Activated B cell treated with CpG ODN at 0.5 μM for 24 hours (primary cell): ENCODE measurements at regions of chr3 and their contacts with region 1.

Region 1: GRCh38 chr3:183635431-183636220 is at the start of gene KLHL24:
- DNase-seq: peak; percentile 83
- ATAC-seq: peak; percentile 73
- H3K4me3 Mint-ChIP-seq: peak within 1 kb of the TSS; percentile 92
- H3K27ac Mint-ChIP-seq: peak within 1 kb of the TSS; percentile 92
- H3K4me1 Mint-ChIP-seq: peaks cover 27% of the 10 kb centered on the region
- H3K27me3 Mint-ChIP-seq: no peaks in the 10 kb centered on the region
- CTCF ChIP-seq: no peak
- total RNA-seq, gene KLHL24: 31.6 and 33.9 TPM in 2 replicates

Region 2: GRCh38 chr3:183285828-183286457 is 349.7 kb before region 1 on chr3:
- CTCF ChIA-PET with region 1: no interaction called
- POLR2A ChIA-PET with region 1: no interaction called
- intact Hi-C with region 1: loop called (anchors 2 kb)
- DNase-seq: peak; percentile 69
- ATAC-seq: peak; percentile 95
- H3K4me3 Mint-ChIP-seq: peak overlapping the region; percentile 78
- H3K27ac Mint-ChIP-seq: peak overlapping the region; percentile 94
- H3K4me1 Mint-ChIP-seq: peaks cover 43% of the 10 kb centered on the region
- H3K27me3 Mint-ChIP-seq: no peaks in the 10 kb centered on the region
- CTCF ChIP-seq: no peak

Region 3: DNA sequence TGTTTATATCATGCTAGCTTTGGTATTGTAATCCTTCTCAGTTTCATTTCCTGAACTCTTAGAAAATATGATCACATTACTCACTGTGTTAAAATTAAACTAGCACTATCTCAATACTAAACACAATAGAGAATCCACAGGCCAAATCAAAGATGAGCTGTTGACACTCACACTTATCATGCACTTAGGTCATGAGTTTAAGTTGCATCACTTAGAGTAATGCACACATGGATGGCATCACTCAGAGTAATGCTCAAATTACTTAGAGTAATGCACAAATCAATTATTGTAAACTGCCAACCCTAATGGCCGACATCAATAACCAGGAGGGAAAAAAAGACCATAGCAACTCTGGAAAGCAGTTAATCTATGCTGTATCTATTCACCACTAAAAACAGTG is 167.2 kb before region 1 on chr3:
- CTCF ChIA-PET with region 1: interaction called, 15 read pairs
- POLR2A ChIA-PET with region 1: no interaction called
- intact Hi-C with region 1: loop called (anchors 1 kb)
- DNase-seq: no peak
- ATAC-seq: no peak
- H3K4me3 Mint-ChIP-seq: no peak overlapping the region
- H3K27ac Mint-ChIP-seq: no peak overlapping the region
- H3K4me1 Mint-ChIP-seq: peaks cover 10% of the 10 kb centered on the region
- H3K27me3 Mint-ChIP-seq: peaks cover 2% of the 10 kb centered on the region
- CTCF ChIP-seq: no peak

Region 4: GRCh38 chr3:183537295-183537730 is 98.3 kb before region 1 on chr3:
- CTCF ChIA-PET with region 1: no interaction called
- POLR2A ChIA-PET with region 1: interaction called, 9 read pairs
- intact Hi-C with region 1: loop called (anchors 1 kb)
- DNase-seq: no peak
- ATAC-seq: no peak
- H3K4me3 Mint-ChIP-seq: peak overlapping the region; percentile 39
- H3K27ac Mint-ChIP-seq: peak overlapping the region; percentile 78
- H3K4me1 Mint-ChIP-seq: peaks cover 94% of the 10 kb centered on the region
- H3K27me3 Mint-ChIP-seq: no peaks in the 10 kb centered on the region
- CTCF ChIP-seq: no peak

Region 5: GRCh38 chr3:183591881-183592521 is 43.6 kb before region 1 on chr3:
- CTCF ChIA-PET with region 1: no interaction called
- POLR2A ChIA-PET with region 1: interaction called, 32 read pairs
- intact Hi-C with region 1: loop called (anchors 1 kb)
- DNase-seq: no peak
- ATAC-seq: peak; percentile 80
- H3K4me3 Mint-ChIP-seq: peak overlapping the region; percentile 59
- H3K27ac Mint-ChIP-seq: peak overlapping the region; percentile 83
- H3K4me1 Mint-ChIP-seq: peaks cover 47% of the 10 kb centered on the region
- H3K27me3 Mint-ChIP-seq: peaks cover 3% of the 10 kb centered on the region
- CTCF ChIP-seq: peak; percentile 42

Region 6: GRCh38 chr3:184174646-184175492 is 539.2 kb after region 1 on chr3 and contains the start of gene AP2M1:
- CTCF ChIA-PET with region 1: no interaction called
- POLR2A ChIA-PET with region 1: no interaction called
- intact Hi-C with region 1: loop called (anchors 1 kb)
- DNase-seq: peak; percentile 99
- ATAC-seq: peak; percentile 97
- H3K4me3 Mint-ChIP-seq: peak within 1 kb of the TSS; percentile 90
- H3K27ac Mint-ChIP-seq: peak within 1 kb of the TSS; percentile 75
- H3K4me1 Mint-ChIP-seq: peaks cover 37% of the 10 kb centered on the region
- H3K27me3 Mint-ChIP-seq: no peaks in the 10 kb centered on the region
- CTCF ChIP-seq: no peak
- total RNA-seq, gene AP2M1: 169 and 177 TPM in 2 replicates